Sigmoid colon (tissue), 7 donors: ENCODE measurements at regions of chr1 and their contacts with region 1.

Region 1: GRCh38 chr1:17661546-17662157 is 93.5 kb upstream of the ACTL8 start:
- DNase-seq: peak; percentile 76
- H3K4me3 ChIP-seq: no peak overlapping the region
- H3K27ac ChIP-seq: no peak overlapping the region
- H3K4me1 ChIP-seq: no peaks in the 10 kb centered on the region
- H3K27me3 ChIP-seq: no peaks in the 10 kb centered on the region
- CTCF ChIP-seq: peak in 3 of 4 experiments; percentile 76 to 88 (median 79)
- EP300 ChIP-seq: no peak
- POLR2A ChIP-seq: no peak

Region 2: GRCh38 chr1:17826165-17826488 is 164.5 kb after region 1 on chr1:
- intact Hi-C with region 1: loop called (anchors 10 kb)
- DNase-seq: no peak
- H3K4me3 ChIP-seq: no peak overlapping the region
- H3K27ac ChIP-seq: no peak overlapping the region
- H3K4me1 ChIP-seq: peaks cover 0 to 3% (median 0%) of the 10 kb centered on the region in 4 donors
- H3K27me3 ChIP-seq: peaks cover 0 to 30% (median 7%) of the 10 kb centered on the region in 3 donors
- CTCF ChIP-seq: peak in 3 of 4 experiments; percentile 21 to 36 (median 23)
- EP300 ChIP-seq: no peak
- POLR2A ChIP-seq: no peak

Region 3: DNA sequence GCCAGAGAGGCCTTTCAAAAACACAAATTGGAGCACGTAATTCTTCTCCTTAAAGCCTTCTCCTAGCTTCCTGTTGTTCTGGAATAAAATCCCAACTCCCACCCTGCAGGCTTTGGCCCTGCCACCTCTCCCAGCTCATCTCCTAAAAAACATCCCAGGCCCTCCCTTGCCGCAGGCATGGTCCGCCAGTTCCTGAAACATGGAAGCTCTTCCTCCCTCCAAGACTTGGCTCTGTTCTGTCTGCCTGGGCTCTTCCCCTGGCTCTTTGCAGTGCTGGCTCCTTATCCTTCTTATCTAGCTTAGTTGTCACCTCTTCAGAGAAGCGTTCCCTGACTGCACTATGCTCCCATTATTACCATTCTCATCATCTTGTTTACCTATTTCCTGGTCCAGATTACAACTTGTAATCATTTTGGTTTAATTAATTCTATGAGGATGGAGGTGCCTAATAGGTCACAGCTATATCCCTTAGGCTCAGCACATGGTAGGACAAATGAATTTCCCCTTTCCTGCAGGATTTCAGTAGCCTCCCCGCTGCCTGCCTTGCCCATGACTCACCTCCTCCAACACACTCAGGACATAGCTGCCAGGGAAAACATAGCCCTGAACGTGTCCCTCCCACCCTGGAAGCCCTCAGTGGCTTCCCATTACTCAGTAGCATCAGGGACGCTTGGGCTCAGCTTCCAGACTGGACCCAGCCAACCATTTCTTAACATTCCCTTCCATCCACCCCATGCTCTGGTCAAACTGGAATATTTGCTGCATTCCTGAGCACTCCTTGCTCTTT is 430.2 kb after region 1 on chr1:
- intact Hi-C with region 1: loop called (anchors 10 kb)
- DNase-seq: no peak
- H3K4me3 ChIP-seq: no peak overlapping the region
- H3K27ac ChIP-seq: no peak overlapping the region
- H3K4me1 ChIP-seq: no peaks in the 10 kb centered on the region
- H3K27me3 ChIP-seq: peaks cover 0 to 13% (median 0%) of the 10 kb centered on the region in 3 donors
- CTCF ChIP-seq: no peak
- EP300 ChIP-seq: no peak
- POLR2A ChIP-seq: no peak

Region 4: GRCh38 chr1:18234790-18235242 is 573.2 kb after region 1 on chr1:
- intact Hi-C with region 1: loop called (anchors 5 kb)
- DNase-seq: no peak
- H3K4me3 ChIP-seq: no peak overlapping the region
- H3K27ac ChIP-seq: no peak overlapping the region
- H3K4me1 ChIP-seq: no peaks in the 10 kb centered on the region
- H3K27me3 ChIP-seq: peaks cover 0 to 14% (median 0%) of the 10 kb centered on the region in 3 donors
- CTCF ChIP-seq: peak; percentile 28 to 76 (median 54)
- EP300 ChIP-seq: no peak
- POLR2A ChIP-seq: no peak